ENCODE measurements at regions of chr2 and their contacts with region 1.

Region 1: DNA sequence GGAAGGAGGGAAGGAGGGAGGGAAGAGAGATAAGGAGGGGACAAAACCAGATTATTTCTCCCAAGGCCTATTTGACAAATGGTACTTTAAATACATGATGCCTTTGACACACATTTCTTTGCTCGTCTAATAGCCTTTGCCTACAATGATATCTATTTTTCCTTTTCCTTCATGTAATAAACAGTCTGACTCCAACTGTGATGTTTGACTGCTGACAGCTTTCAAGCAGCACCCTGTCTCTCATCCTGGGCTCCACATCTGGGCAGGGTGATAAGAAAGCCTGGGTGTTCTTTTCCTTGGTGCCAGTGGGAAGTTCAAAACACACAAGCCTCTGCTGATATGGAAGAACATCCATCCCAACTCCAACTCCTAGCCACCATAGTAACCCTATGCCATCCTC is 1277.7 kb upstream of the NXPH2 start:
- DNase-seq: no peak
- H3K4me3 ChIP-seq: no peak overlapping the region
- H3K27ac ChIP-seq: no peak overlapping the region
- H3K4me1 ChIP-seq: no peaks in the 10 kb centered on the region
- H3K27me3 ChIP-seq: no peaks in the 10 kb centered on the region
- CTCF ChIP-seq: no peak

Region 2: DNA sequence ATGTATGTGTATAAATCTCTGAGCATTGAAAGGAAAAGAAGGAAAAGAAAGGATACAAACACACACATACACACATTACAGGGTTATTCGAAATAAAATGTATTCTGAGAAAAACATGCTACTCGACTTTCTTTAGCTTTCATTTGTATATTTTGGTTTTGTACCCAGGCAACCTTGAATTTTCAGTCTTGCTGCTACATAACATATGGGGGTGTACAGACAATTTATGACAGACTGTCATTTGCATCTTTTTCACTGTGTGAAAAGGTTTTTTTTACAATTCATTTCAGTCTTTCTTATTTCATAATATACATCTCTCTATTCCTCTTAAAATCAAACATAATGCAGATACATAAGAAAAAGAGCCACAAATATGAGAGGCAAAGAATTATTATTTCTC is 39.4 kb before region 1 on chr2:
- CTCF ChIA-PET with region 1: no interaction called
- POLR2A ChIA-PET with region 1: no interaction called
- intact Hi-C with region 1: loop called (anchors 2 kb)
- DNase-seq: no peak
- H3K4me3 ChIP-seq: no peak overlapping the region
- H3K27ac ChIP-seq: no peak overlapping the region
- H3K4me1 ChIP-seq: no peaks in the 10 kb centered on the region
- H3K27me3 ChIP-seq: no peaks in the 10 kb centered on the region
- CTCF ChIP-seq: no peak

Region 3: GRCh38 chr2:140178234-140178633 is 120.3 kb after region 1 on chr2:
- CTCF ChIA-PET with region 1: no interaction called
- POLR2A ChIA-PET with region 1: no interaction called
- intact Hi-C with region 1: no loop called
- DNase-seq: no peak
- H3K4me3 ChIP-seq: no peak overlapping the region
- H3K27ac ChIP-seq: no peak overlapping the region
- H3K4me1 ChIP-seq: no peaks in the 10 kb centered on the region
- H3K27me3 ChIP-seq: no peaks in the 10 kb centered on the region
- CTCF ChIP-seq: no peak

Measured in PC-9 (cell line).